ENCODE measurements at regions of chr2 and their contacts with region 1.

Region 1: GRCh38 chr2:174487108-174487819 is 435 bp upstream of the GPR155 start:
- DNase-seq: peak; percentile 100
- H3K4me3 Mint-ChIP-seq: peak overlapping the region; percentile 97
- H3K27ac Mint-ChIP-seq: peak overlapping the region; percentile 95
- H3K4me1 Mint-ChIP-seq: peaks cover 51% of the 10 kb centered on the region
- H3K27me3 Mint-ChIP-seq: no peaks in the 10 kb centered on the region

Region 2: GRCh38 chr2:174395284-174395968 is 91.8 kb before region 1 on chr2 and contains the start of gene SCRN3:
- CTCF ChIA-PET with region 1: no interaction called
- intact Hi-C with region 1: loop called (anchors 1 kb)
- DNase-seq: peak; percentile 88
- H3K4me3 Mint-ChIP-seq: peak within 1 kb of the TSS; percentile 99
- H3K27ac Mint-ChIP-seq: peak within 1 kb of the TSS; percentile 99
- H3K4me1 Mint-ChIP-seq: peaks cover 38% of the 10 kb centered on the region
- H3K27me3 Mint-ChIP-seq: no peaks in the 10 kb centered on the region
- total RNA-seq, gene SCRN3: 10.7 to 12.3 TPM

Region 3: GRCh38 chr2:174546581-174547506 is 59.6 kb after region 1 on chr2:
- CTCF ChIA-PET with region 1: interaction called, 17 read pairs
- intact Hi-C with region 1: loop called (anchors 1 kb)
- DNase-seq: peak; percentile 74
- H3K4me3 Mint-ChIP-seq: no peak overlapping the region
- H3K27ac Mint-ChIP-seq: peak overlapping the region; percentile 3
- H3K4me1 Mint-ChIP-seq: peaks cover 9% of the 10 kb centered on the region
- H3K27me3 Mint-ChIP-seq: no peaks in the 10 kb centered on the region

Region 4: GRCh38 chr2:174593574-174594203 is 106.4 kb after region 1 on chr2:
- CTCF ChIA-PET with region 1: no interaction called
- intact Hi-C with region 1: loop called (anchors 1 kb)
- DNase-seq: peak; percentile 87
- H3K4me3 Mint-ChIP-seq: peak overlapping the region; percentile 77
- H3K27ac Mint-ChIP-seq: peak overlapping the region; percentile 99
- H3K4me1 Mint-ChIP-seq: peaks cover 52% of the 10 kb centered on the region
- H3K27me3 Mint-ChIP-seq: no peaks in the 10 kb centered on the region

Region 5: DNA sequence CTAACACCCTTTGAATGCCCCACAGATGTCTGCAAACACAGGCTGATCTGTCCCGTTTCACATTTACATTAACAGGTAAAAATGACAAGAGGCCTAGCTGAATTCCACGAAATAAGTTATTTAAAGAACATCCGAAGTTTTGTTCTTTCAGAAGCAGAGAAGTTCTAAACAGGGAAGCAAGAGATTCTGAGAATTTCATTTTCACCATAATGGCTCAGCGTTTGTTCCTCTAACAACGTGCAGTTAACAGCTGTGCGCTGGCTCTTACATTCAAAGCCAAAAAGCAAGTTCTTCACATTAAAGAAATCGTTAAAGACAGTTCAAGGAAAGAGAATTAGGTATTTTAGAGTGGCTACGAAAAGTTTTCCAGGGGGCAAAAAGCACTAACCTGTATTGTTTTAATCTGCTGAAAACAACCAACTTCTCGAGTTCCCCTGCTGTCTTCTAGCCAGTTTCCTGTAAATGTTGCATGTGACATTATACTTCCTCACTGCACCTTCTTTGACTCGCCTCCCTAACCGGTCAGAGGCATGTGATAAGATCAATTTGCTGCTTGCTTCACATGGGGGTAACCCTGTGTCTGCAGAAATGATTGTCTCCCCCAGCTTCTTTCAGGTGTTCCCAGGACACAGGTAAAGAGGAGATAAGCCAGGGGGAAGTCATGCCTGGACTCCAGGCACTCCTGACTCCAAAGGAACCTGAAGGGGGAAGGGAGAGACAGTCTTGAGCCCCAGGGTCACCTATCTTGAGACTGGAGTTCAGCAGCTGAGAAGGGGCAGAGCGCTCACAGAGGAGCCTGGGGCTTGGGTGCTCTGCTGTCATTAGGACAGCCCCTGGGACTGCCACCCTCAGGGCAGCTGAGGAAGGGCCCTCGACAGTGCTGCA is 147.1 kb after region 1 on chr2:
- CTCF ChIA-PET with region 1: no interaction called
- intact Hi-C with region 1: loop called (anchors 1 kb)
- DNase-seq: peak; percentile 79
- H3K4me3 Mint-ChIP-seq: peak overlapping the region; percentile 91
- H3K27ac Mint-ChIP-seq: peak overlapping the region; percentile 99
- H3K4me1 Mint-ChIP-seq: peaks cover 60% of the 10 kb centered on the region
- H3K27me3 Mint-ChIP-seq: no peaks in the 10 kb centered on the region

Region 6: GRCh38 chr2:175432021-175432420 is 944.8 kb after region 1 on chr2:
- CTCF ChIA-PET with region 1: no interaction called
- intact Hi-C with region 1: no loop called
- DNase-seq: no peak
- H3K4me3 Mint-ChIP-seq: no peak overlapping the region
- H3K27ac Mint-ChIP-seq: no peak overlapping the region
- H3K4me1 Mint-ChIP-seq: no peaks in the 10 kb centered on the region
- H3K27me3 Mint-ChIP-seq: no peaks in the 10 kb centered on the region

Measured in activated naive CD4-positive, alpha-beta T cell treated with anti-CD3 and anti-CD28 coated beads for 36 hours (primary cell).